ENCODE measurements at regions of chr5 and their contacts with region 1.

Region 1: DNA sequence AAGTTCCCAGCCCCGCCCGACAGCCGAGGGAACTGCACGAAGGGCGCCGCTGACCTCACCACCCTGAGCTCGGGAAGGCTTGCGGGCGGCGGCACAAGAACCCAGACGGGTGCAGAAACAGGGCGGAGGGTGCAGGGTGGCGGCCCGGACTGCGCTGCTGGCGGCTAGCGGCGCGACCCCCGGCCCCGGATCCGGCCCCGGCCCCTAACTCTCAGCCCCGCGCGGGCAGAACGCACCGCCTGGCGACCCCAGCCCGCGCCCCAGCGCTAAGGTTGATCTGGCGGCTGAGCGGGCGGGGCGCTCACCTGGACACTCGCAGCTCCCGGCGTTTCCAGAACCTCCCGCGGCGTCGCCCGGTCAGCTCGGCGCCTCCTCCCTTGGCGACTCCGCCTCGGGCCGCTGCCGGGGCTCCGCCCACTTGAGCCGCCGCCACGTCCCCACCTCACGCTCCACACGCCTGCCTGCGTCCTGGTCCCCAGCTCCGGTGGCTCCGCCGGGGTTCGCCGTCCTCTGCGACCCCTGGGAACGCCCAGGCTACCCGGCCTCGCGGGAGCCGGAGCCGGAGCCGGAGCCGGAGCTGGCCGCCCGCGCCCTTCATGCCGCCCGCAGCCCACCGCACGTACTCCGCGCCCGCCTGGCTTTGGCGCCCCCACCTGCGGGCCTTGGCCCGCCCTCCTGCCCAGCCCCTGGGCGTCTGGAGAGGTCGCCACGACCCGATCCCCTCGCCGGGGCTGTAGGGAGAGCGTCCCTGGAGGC is at the start of gene P4HA2:
- DNase-seq: peak; percentile 80 to 87
- ATAC-seq: peak; percentile 79 to 92 (median 88)
- H3K4me3 ChIP-seq: peak within 1 kb of the TSS; percentile 59 to 98 (median 88)
- H3K27ac ChIP-seq: peak within 1 kb of the TSS; percentile 77 to 99 (median 94)
- H3K4me1 ChIP-seq: peaks cover 29 to 62% (median 44%) of the 10 kb centered on the region in 9 donors
- H3K27me3 ChIP-seq: peaks cover 0 to 16% (median 0%) of the 10 kb centered on the region in 7 donors
- CTCF ChIP-seq: peak in 4 of 9 donors; percentile 2 to 40 (median 23)
- total RNA-seq, gene P4HA2: 35.0 to 77.1 (median 52.4) TPM

Region 2: GRCh38 chr5:132190161-132190817 is 37.4 kb before region 1 on chr5:
- intact Hi-C with region 1: loop called in 3 of 10 experiments (anchors 5 to 10 kb)
- DNase-seq: peak in 1 of 2 donors; percentile 55
- ATAC-seq: peak; percentile 85 to 96 (median 92)
- H3K4me3 ChIP-seq: no peak overlapping the region
- H3K27ac ChIP-seq: no peak overlapping the region
- H3K4me1 ChIP-seq: peaks cover 0 to 11% (median 0%) of the 10 kb centered on the region in 9 donors
- H3K27me3 ChIP-seq: no peaks in the 10 kb centered on the region
- CTCF ChIP-seq: peak; percentile 57 to 85 (median 74)

Region 3: DNA sequence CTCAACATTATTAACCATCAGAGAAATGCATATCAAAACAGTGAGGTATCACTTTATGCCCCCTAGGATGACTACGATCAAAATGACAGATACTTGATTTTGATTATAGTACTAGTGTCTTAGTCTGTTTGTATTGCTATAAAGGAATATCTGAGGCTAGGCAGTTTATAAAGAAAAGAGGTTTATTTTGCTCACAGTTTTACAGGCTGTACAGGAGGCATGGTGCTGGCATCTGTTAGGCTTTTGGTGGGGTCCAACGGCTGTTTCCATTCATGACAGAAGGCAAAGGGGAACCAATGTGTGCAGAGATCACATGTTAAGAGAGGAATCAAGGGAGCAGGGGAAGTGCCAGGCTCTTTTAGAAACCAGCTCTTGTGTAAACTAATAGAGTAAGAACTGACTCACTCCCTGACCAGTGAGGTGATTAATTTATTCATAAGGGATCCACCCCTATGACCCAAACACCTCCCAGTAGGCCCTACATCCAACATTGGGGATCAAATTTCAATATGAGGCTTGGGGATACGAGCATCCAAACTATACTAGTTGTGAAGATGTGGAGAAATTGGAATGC is 751.8 kb after region 1 on chr5:
- intact Hi-C with region 1: no loop called
- DNase-seq: no peak
- ATAC-seq: no peak
- H3K4me3 ChIP-seq: no peak overlapping the region
- H3K27ac ChIP-seq: no peak overlapping the region
- H3K4me1 ChIP-seq: no peaks in the 10 kb centered on the region
- H3K27me3 ChIP-seq: no peaks in the 10 kb centered on the region
- CTCF ChIP-seq: no peak

Measured in heart right ventricle (tissue), 16 donors.